IMR-90 (cell line): ENCODE measurements at regions of chr4 and their contacts with region 1.

Region 1: DNA sequence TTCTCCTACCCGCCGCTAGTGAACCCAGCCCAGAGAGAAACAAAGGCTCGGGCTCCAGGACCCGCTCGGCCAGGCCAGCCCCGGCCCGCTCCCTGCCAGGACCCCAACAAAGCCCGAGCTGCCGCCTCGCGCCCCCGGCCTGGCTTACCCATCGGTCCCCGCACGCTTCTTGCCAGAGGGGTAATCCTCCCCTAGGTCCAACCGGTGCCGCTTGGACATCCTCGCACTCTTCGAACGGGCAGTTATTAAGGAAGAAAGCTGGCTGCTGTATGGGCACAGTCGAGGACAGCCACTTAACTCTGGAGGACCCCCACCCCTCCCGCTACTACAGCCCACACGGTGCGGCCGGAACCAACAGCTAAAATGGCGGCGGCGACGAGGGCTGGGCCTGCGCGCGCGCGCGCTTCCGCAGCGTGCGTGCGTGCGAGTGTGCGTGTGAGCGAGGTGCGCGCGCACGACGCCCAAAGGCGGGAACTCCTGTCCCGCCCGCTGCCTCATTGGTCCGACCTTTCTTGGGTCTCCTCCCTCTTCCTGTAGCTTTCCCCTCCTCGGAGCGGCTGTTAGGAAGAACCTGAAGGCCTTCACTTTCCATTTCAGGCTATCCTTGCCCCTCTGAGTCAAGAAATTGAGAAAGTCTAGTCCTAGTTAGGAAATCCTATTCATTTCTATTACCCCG is at the start of gene DHX15:
- DNase-seq: peak; percentile 97
- ATAC-seq: peak; percentile 95
- H3K4me3 ChIP-seq: peak within 1 kb of the TSS; percentile 89
- H3K27ac ChIP-seq: peak within 1 kb of the TSS; percentile 96
- H3K4me1 ChIP-seq: peaks cover 2% of the 10 kb centered on the region; the same call in 1 of the 2 replicates
- H3K27me3 ChIP-seq: no peaks in the 10 kb centered on the region
- CTCF ChIP-seq: 0 out of 2 replicates have a peak, but pooled peaks have one; percentile 4
- POLR2A ChIP-seq: peak; percentile 84; the same call in 1 of the 2 replicates
- RAD21 ChIP-seq: no peak
- total RNA-seq, gene DHX15: 172 and 240 TPM in 2 replicates

Region 2: GRCh38 chr4:24642981-24643547 is 58.8 kb after region 1 on chr4:
- CTCF ChIA-PET with region 1: no interaction called
- POLR2A ChIA-PET with region 1: no interaction called
- dilution Hi-C with region 1: no loop called
- in situ Hi-C with region 1: no loop called
- intact Hi-C with region 1: loop called (anchors 1 kb)
- DNase-seq: peak; percentile 85
- ATAC-seq: peak; percentile 78
- H3K4me3 ChIP-seq: no peak overlapping the region
- H3K27ac ChIP-seq: peak overlapping the region; percentile 89; the same call in 1 of the 2 replicates
- H3K4me1 ChIP-seq: peaks cover 24% of the 10 kb centered on the region
- H3K27me3 ChIP-seq: peaks cover 3% of the 10 kb centered on the region; the same call in 1 of the 2 replicates
- CTCF ChIP-seq: no peak
- POLR2A ChIP-seq: no peak
- RAD21 ChIP-seq: no peak

Region 3: DNA sequence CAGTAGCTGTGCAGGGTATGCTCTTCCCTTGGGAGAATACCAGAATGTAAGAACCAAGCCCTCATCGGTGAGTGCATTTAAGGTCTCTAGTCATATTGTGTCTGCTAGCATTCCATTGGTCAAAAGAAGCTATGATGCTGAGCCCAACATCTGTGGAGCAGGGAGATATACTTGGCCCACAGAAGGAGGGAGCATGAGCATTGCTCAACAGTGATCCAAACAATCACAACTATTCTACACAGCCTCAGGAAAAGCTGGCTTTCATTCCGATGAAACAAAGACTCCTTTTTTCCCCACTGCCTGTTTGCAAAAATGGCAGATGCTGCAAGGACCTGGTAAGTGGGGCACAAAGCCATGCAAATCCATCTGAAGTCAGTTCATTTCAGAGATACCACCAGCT is 80.6 kb after region 1 on chr4:
- CTCF ChIA-PET with region 1: no interaction called
- POLR2A ChIA-PET with region 1: no interaction called
- dilution Hi-C with region 1: no loop called
- in situ Hi-C with region 1: no loop called
- intact Hi-C with region 1: loop called (anchors 5 kb)
- DNase-seq: peak; percentile 55
- ATAC-seq: peak; percentile 96
- H3K4me3 ChIP-seq: no peak overlapping the region
- H3K27ac ChIP-seq: peak overlapping the region; percentile 72; the same call in 1 of the 2 replicates
- H3K4me1 ChIP-seq: peaks cover 5% of the 10 kb centered on the region
- H3K27me3 ChIP-seq: peaks cover 21% of the 10 kb centered on the region
- CTCF ChIP-seq: no peak
- POLR2A ChIP-seq: no peak
- RAD21 ChIP-seq: no peak

Region 4: DNA sequence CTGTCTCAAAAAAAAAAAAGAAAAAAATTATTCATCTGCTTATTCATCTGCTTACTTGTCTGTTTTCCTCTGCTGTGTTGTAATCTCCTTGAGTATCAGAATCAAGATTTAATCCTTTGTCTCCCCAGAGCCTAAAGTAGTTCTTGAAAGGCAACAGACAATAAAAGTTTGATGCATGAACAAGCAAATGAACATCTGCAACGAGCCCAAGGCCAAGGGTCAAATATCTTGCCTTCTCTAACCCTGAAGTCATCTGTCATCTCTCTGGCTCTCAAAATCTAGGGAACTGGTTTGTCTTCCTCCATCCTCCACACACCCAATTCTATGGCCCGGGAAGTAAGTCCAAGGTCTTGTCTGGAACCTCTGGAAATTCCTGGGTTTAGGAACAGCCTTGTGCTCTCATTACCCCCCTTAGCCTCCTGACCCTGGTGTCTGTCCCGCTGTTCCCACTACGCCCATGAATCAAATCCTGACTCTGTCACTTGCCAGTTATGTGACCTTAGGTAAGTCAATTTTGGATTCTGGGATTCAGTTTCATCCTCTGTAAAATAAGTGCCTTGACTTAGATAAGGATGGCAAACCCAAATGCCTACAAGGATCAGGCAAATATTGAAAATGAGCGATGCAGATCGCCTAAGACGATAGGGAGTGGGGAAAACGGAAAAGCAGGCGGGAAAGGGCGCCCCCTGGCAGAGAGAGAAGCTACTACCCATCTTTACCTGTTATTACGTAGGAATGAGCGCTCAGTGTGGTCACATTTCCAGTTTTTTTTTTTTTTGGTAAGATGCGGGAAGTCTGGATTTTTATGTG is 102.8 kb after region 1 on chr4:
- CTCF ChIA-PET with region 1: no interaction called
- POLR2A ChIA-PET with region 1: no interaction called
- dilution Hi-C with region 1: no loop called
- in situ Hi-C with region 1: no loop called
- intact Hi-C with region 1: loop called (anchors 2 kb)
- DNase-seq: no peak
- ATAC-seq: no peak
- H3K4me3 ChIP-seq: no peak overlapping the region
- H3K27ac ChIP-seq: no peak overlapping the region
- H3K4me1 ChIP-seq: peaks cover 3% of the 10 kb centered on the region; the same call in 1 of the 2 replicates
- H3K27me3 ChIP-seq: peaks cover 7% of the 10 kb centered on the region
- CTCF ChIP-seq: peak; percentile 35
- POLR2A ChIP-seq: no peak
- RAD21 ChIP-seq: peak; percentile 48

Region 5: DNA sequence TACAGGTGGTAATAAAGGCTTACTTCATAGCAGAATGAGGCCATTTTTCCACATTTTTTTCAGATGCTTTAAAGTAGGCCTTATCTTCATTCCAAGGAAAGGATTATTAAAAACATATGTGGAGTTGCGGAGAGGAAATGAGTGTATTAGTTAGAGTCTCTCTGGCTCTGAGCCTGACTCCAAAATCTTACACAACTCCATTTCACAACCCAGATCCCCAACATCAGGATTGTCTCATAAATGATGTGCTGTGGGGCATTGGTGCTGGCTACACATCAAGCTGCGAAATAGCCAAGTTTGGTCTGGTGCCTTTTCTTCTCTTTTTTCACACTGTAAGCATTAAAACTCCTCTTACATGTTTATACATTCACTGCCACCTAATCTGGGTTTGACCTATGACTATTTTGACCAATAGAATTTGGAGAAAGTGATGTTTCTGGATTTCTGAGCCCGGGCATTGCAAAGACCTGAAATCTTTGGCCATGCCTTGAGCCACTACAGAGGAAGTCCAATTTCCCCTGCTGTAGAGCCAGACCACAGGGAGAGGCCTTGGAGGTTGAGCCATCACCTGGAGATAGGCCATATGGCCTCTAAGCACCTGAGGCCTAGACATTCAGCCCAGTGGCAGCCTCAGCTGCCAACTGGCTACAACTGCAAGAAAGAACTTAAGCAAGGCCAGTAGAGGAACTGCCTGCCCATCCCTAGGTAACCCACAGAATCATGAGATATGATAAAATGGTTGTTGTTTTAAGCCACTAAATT is 194.3 kb after region 1 on chr4:
- CTCF ChIA-PET with region 1: no interaction called
- POLR2A ChIA-PET with region 1: no interaction called
- dilution Hi-C with region 1: no loop called
- in situ Hi-C with region 1: no loop called
- intact Hi-C with region 1: loop called (anchors 5 kb)
- DNase-seq: peak; percentile 98
- ATAC-seq: peak; percentile 88
- H3K4me3 ChIP-seq: no peak overlapping the region
- H3K27ac ChIP-seq: peak overlapping the region; percentile 83
- H3K4me1 ChIP-seq: peaks cover 18% of the 10 kb centered on the region
- H3K27me3 ChIP-seq: no peaks in the 10 kb centered on the region
- CTCF ChIP-seq: no peak
- POLR2A ChIP-seq: no peak
- RAD21 ChIP-seq: no peak

Region 6: GRCh38 chr4:24912252-24913118 is 328.2 kb after region 1 on chr4 and contains the start of gene CCDC149:
- CTCF ChIA-PET with region 1: no interaction called
- POLR2A ChIA-PET with region 1: no interaction called
- dilution Hi-C with region 1: no loop called
- in situ Hi-C with region 1: no loop called
- intact Hi-C with region 1: loop called (anchors 5 kb)
- DNase-seq: peak; percentile 57
- ATAC-seq: peak; percentile 94
- H3K4me3 ChIP-seq: peak within 1 kb of the TSS; percentile 70
- H3K27ac ChIP-seq: peak within 1 kb of the TSS; percentile 56
- H3K4me1 ChIP-seq: peaks cover 6% of the 10 kb centered on the region
- H3K27me3 ChIP-seq: no peaks in the 10 kb centered on the region
- CTCF ChIP-seq: no peak
- POLR2A ChIP-seq: peak; percentile 58; the same call in 1 of the 2 replicates
- RAD21 ChIP-seq: no peak
- total RNA-seq, gene CCDC149: 7.0 and 8.3 TPM in 2 replicates

Region 7: DNA sequence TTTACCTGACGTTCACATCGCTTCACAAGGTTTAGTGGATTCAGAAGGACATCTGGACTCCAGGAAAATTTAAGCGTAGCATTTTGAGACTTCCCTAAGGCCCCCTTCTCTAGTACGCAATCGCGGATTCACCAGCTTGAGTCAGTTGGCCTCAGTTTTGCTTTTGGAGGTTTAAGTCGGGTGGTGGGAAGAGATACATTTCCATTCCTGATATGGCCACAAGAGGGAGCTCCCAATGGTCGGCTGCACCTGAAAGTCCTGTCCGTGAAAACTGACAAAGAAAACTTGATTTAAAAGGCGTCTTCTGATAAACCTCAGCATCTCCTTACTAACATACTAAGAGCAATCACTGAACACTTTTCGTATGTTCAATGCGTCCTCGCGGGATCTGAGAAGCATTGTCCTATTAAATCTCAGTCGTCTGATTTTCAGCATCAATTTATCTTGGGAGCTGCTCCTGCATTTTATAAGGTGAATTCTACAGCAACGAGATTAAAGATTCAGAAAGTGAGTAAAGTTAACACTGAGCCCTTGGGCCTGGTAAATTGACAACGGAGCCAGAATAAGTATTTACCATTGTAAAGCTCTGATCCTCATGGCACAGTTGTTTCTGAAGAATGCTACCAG is 395.9 kb after region 1 on chr4:
- CTCF ChIA-PET with region 1: no interaction called
- POLR2A ChIA-PET with region 1: no interaction called
- dilution Hi-C with region 1: no loop called
- in situ Hi-C with region 1: no loop called
- intact Hi-C with region 1: loop called (anchors 1 kb)
- DNase-seq: peak; percentile 62
- ATAC-seq: peak; percentile 53; the same call in 1 of the 2 replicates
- H3K4me3 ChIP-seq: no peak overlapping the region
- H3K27ac ChIP-seq: no peak overlapping the region
- H3K4me1 ChIP-seq: no peaks in the 10 kb centered on the region
- H3K27me3 ChIP-seq: peaks cover 36% of the 10 kb centered on the region
- CTCF ChIP-seq: peak; percentile 77
- POLR2A ChIP-seq: no peak
- RAD21 ChIP-seq: peak; percentile 68